ENCODE measurements at regions of chr3 and their contacts with region 1.

Region 1: DNA sequence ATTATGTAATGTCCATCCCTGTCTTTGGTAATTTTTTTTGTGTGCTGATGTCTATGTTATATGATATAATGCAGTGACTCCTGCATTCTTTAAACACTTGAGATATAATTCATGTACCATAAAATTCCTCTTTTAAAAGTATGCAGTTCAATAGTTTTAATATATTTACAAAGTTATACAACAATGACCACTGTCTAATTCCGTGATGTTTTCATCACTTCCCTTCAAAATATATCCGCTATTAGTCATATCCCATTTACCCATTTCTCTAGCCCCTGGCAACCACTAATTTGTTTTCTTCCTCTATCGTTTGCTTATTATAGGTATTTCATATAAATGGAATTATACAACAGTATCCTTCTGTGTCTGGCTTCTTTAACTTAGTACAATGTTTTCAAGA is 64.9 kb upstream of the SUCLG2 start:
- DNase-seq: peak; percentile 74
- ATAC-seq: peak; percentile 97
- H3K4me3 ChIP-seq: no peak overlapping the region
- H3K27ac ChIP-seq: peak overlapping the region; percentile 56
- H3K4me1 ChIP-seq: peaks cover 15% of the 10 kb centered on the region
- H3K27me3 ChIP-seq: no peaks in the 10 kb centered on the region
- CTCF ChIP-seq: no peak

Region 2: DNA sequence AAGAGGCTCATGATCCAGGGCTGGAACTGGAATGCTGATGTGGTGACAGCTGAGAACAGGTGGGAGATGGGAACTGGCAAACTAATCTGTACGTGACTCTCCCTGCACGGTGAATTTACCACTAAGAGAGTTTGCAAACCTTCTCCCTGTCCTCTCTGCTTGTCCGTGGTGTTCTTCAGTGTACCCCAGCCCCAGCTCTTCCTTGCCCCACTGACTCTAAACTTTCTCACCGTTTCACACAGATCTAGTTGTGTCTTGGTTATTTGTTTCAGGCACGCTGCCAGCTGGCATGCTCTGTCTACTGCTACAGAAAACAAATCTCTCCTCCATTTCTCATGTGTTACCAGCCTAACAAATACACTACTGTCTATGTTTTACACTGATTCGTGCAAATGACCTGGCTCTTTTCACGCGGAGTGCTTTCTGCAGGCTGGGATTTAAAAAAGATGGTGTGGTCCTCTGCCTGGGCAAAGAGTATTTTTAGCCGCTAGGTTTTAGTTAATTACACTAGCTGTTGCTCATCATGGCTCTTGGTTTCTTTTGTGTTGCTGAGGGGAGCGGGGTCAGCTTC is 1025.8 kb before region 1 on chr3:
- CTCF ChIA-PET with region 1: no interaction called
- POLR2A ChIA-PET with region 1: no interaction called
- intact Hi-C with region 1: no loop called
- DNase-seq: no peak
- ATAC-seq: no peak
- H3K4me3 ChIP-seq: no peak overlapping the region
- H3K27ac ChIP-seq: no peak overlapping the region
- H3K4me1 ChIP-seq: no peaks in the 10 kb centered on the region
- H3K27me3 ChIP-seq: no peaks in the 10 kb centered on the region
- CTCF ChIP-seq: no peak

Region 3: DNA sequence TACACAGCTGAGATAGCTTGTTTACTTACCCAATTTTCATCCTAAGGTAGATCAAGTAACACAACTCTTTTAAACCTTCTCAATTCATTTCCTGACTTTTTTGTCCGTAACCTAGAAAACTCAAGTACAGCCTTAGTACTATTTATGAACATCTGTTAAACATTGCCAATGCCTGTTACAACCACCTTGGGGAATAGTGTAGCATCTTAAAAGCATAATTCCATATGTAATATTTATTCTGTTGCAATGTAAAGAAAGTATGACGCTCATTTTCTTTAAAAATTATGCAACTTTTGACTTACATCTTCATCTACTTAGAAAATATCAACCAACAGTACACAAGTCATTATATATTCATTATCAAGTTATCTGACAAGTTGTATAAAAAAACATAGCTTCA is 119.5 kb before region 1 on chr3:
- CTCF ChIA-PET with region 1: no interaction called
- POLR2A ChIA-PET with region 1: no interaction called
- intact Hi-C with region 1: no loop called
- DNase-seq: no peak
- ATAC-seq: no peak
- H3K4me3 ChIP-seq: no peak overlapping the region
- H3K27ac ChIP-seq: no peak overlapping the region
- H3K4me1 ChIP-seq: peaks cover 19% of the 10 kb centered on the region
- H3K27me3 ChIP-seq: no peaks in the 10 kb centered on the region
- CTCF ChIP-seq: no peak

Region 4: GRCh38 chr3:67610458-67610857 is 108.9 kb before region 1 on chr3:
- CTCF ChIA-PET with region 1: no interaction called
- POLR2A ChIA-PET with region 1: no interaction called
- intact Hi-C with region 1: loop called (anchors 1 kb)
- DNase-seq: peak; percentile 74
- ATAC-seq: peak; percentile 84
- H3K4me3 ChIP-seq: no peak overlapping the region
- H3K27ac ChIP-seq: peak overlapping the region; percentile 92
- H3K4me1 ChIP-seq: peaks cover 22% of the 10 kb centered on the region
- H3K27me3 ChIP-seq: no peaks in the 10 kb centered on the region
- CTCF ChIP-seq: no peak

Region 5: GRCh38 chr3:67647390-67647878 is 71.9 kb before region 1 on chr3:
- CTCF ChIA-PET with region 1: no interaction called
- POLR2A ChIA-PET with region 1: no interaction called
- intact Hi-C with region 1: loop called (anchors 1 kb)
- DNase-seq: peak; percentile 88
- ATAC-seq: peak; percentile 92
- H3K4me3 ChIP-seq: no peak overlapping the region
- H3K27ac ChIP-seq: peak overlapping the region; percentile 99
- H3K4me1 ChIP-seq: peaks cover 37% of the 10 kb centered on the region
- H3K27me3 ChIP-seq: no peaks in the 10 kb centered on the region
- CTCF ChIP-seq: no peak

Region 6: DNA sequence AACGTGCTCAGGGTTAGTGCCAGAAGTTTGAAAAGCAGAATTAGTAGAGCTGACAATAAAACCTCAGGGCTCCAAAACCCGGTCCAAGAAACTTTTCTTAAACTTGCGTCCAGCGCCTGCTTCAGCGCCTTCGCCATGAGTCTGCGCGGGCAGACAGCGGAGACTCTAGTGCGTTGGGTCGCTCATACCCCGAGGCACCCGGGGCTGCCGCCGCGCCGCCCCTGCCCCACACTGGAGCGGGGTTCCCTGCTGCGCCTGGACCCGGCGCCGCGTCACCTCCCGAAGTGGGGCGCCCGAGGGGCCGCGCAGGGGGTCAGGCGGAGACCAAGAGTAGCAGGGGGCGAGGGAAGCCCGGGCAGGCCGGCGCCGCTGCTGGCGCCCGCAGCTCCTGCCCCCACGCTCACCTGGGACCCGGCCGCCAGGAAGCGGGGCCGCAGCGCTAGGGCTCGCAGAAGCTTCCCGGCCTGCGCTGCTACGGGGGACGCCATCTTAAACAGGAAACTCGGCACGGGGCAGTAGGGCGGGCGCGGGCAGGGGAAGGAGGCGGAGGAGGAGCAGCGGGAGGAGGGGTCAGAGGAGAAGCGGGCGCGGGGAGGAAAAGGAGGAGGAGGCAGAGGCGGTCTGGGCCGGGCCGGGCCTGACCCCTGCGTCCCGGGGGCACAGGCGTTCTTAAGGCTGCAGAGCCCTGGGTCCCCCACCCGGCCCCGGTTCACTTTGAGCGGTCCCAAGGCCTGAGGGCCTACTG is 65.1 kb before region 1 on chr3 and contains the start of gene SUCLG2:
- CTCF ChIA-PET with region 1: no interaction called
- POLR2A ChIA-PET with region 1: no interaction called
- intact Hi-C with region 1: loop called (anchors 2 kb)
- DNase-seq: peak; percentile 56
- ATAC-seq: peak; percentile 92
- H3K4me3 ChIP-seq: peak within 1 kb of the TSS; percentile 77
- H3K27ac ChIP-seq: peak within 1 kb of the TSS; percentile 77
- H3K4me1 ChIP-seq: peaks cover 20% of the 10 kb centered on the region
- H3K27me3 ChIP-seq: no peaks in the 10 kb centered on the region
- CTCF ChIP-seq: no peak
- total RNA-seq, gene SUCLG2: 20.2 and 22.3 TPM in 2 replicates

Region 7: DNA sequence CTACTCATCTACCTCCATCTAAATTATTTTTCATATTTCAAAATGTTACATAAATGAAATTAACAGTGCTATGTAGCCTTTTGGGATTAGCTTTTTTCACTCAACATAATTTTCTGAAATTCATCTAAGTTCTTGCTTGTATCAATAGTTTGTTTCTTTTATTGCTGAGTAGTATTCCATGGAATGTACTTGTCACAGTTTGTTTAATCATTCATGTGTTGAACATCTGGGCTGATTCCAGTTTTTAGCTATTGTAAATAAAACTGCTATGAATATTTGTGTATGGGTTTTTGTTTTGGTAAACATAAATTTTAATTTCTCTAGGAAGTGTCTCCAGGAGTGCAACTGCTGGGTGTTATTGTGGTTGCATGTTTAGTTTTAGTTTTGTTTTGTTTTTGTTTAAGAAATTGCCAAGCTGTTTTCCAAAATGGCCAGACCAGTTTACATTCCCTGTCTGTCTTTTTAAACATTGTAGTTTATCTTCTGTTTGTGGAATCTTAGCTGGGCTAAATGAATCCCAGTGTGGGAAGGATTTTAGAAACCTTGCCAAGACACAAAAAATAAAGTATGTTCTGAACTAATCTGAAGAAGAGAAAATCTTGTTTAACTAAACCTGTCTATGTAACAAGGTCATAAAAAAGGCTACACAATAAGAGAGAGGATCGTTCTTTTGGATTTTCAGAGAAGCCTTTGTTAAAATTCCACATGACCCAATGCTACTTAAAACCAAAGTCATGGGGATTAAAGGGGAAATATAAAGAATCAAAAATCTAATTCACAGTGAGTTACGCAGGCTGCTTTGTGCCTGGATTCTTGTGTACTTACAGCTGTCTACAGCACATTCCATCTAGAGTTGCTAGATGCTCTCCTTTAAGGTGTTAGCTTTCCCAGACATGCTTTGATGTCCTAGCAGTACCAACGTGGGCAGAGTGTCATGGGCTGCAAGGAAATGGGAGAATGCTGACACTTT is 64.2 kb after region 1 on chr3:
- CTCF ChIA-PET with region 1: no interaction called
- POLR2A ChIA-PET with region 1: no interaction called
- intact Hi-C with region 1: loop called (anchors 2 kb)
- DNase-seq: peak; percentile 57
- ATAC-seq: peak; percentile 78
- H3K4me3 ChIP-seq: no peak overlapping the region
- H3K27ac ChIP-seq: peak overlapping the region; percentile 49
- H3K4me1 ChIP-seq: peaks cover 15% of the 10 kb centered on the region
- H3K27me3 ChIP-seq: no peaks in the 10 kb centered on the region
- CTCF ChIP-seq: no peak